Common myeloid progenitor, CD34-positive (primary cell): ENCODE measurements at regions of chr1 and their contacts with region 1.

Region 1: DNA sequence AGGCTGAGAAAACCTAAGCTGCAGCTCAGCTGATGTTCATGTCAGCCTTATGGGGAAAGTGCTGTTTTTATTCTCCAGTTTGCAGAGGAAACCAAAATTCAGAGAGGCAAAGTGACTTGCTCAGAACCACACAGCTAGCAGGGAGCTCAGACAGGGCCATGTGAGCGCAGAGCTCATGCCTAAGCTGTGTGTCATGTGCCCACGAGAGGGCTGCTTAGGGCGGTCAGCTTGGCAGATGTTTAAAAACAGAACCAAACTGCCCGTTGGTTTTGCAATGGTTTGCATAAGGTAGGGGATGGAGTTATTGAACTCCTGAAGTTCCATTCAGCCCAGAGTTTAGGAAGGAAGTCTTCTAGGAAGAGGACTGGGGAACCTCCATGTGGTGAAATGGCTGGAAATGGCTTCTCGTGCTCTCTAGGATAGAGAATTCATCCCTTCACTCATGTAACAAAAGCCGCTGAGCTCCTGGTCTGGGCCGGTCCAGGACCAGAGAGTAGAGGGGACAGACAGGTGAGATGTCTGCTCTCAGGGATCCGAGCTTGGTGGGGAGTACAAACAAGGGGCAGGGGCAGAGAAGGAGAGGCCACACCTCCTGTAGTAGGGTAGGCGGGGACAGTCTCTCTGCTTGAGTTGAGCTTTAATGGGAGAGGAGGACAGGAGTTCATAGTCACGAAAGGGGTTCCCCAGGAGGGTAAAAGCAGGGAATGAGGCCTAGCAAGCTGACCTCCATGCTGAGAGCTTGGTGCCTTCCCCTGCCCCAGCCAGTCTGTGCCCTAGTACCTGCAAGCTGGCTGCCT is 46.9 kb downstream of the ARHGEF10L start:
- DNase-seq: no peak
- H3K4me3 ChIP-seq: no peak overlapping the region
- H3K27ac ChIP-seq: no peak overlapping the region
- H3K4me1 ChIP-seq: peaks cover 0 to 27% (median 15%) of the 10 kb centered on the region in 4 experiments
- H3K27me3 ChIP-seq: no peaks in the 10 kb centered on the region

Region 2: GRCh38 chr1:17207966-17208418 is 378.4 kb before region 1 on chr1:
- CTCF ChIA-PET with region 1: no interaction called
- POLR2A ChIA-PET with region 1: no interaction called
- DNase-seq: peak; percentile 70 to 87 (median 84)
- H3K4me3 ChIP-seq: peak overlapping the region in 1 of 7 experiments; percentile 16
- H3K27ac ChIP-seq: no peak overlapping the region
- H3K4me1 ChIP-seq: peaks cover 2 to 48% (median 33%) of the 10 kb centered on the region in 4 experiments
- H3K27me3 ChIP-seq: no peaks in the 10 kb centered on the region

Region 3: DNA sequence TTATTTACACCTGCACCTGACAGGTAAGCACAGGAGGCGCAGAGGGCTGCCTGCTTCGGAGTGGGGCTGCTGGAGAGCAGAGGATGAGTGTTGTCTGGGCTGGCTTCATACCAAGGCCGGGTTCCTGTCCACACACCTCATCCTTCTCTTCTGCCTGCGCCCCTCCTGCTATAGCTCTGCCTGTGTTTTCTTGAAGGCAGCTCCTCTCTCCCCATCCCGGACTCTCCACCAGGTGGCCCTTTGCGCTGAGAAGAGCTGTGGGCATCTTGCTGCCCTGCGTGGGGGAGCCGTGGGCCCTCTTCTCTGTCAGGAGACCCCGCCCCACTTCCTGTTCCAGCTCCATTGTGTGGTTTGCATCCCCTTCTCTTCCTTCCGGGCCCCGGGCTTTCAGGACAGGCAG is 11.9 kb before region 1 on chr1:
- CTCF ChIA-PET with region 1: interaction called, 23 read pairs
- POLR2A ChIA-PET with region 1: interaction called, 3 read pairs
- DNase-seq: peak in 1 of 3 donors; percentile 24
- H3K4me3 ChIP-seq: peak overlapping the region in 1 of 7 experiments; percentile 6
- H3K27ac ChIP-seq: no peak overlapping the region
- H3K4me1 ChIP-seq: peaks cover 0 to 10% (median 5%) of the 10 kb centered on the region in 4 experiments
- H3K27me3 ChIP-seq: peaks cover 0 to 2% (median 0%) of the 10 kb centered on the region in 5 experiments